ENCODE measurements at regions of chr11 and their contacts with region 1.

Region 1: DNA sequence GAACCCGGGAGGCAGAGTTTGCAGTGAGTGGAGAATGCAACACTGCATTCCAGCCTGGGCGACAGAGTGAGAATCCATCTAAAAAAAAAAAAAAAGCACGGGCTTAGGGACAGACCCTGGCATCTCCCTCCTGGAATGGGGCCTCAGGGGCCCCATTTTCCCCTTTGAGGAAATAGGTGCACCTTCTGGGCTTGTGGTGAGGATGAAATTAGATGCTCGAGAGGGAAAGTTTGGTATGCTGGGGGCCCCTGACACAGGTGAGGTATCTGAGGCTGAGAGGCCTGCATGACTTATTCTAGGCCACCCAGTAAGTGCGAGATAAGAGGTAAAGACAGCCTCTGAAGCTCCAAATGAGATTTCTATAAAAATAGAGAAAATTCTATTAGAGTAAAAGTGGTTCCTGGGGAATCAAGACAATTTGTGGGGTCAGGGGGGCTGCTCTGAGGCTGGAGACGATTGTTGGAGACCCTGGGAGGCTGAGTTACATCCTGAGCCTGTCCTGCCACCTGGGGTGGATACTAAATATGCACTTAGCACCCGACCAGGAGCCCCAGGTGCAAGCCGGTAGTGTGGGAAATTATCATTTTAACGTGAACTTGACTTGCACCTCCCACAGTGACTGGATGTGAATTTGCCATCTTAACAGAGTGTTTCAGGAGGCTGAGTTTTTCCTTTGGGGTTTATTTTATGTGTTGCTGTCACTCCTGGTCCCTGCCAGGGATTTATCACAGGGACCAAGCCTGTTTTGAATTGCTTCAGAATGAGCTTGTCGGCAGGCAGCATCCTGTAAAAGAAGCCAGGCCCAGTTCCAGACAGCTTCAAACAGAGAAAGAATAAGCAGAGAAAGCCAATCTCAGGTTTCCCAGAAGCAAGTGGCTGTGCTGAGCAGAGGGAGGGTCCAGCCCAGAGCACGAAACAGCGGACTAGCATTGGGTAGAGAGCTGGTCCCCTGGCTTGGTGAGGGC is 48.4 kb upstream of the TSKU start:
- DNase-seq: no peak
- H3K4me3 ChIP-seq: no peak overlapping the region
- H3K27ac ChIP-seq: no peak overlapping the region
- H3K4me1 ChIP-seq: peaks cover 0 to 12% (median 5%) of the 10 kb centered on the region in 4 donors
- H3K27me3 ChIP-seq: peaks cover 0 to 3% (median 0%) of the 10 kb centered on the region in 4 donors
- CTCF ChIP-seq: no peak
- EP300 ChIP-seq: no peak
- POLR2A ChIP-seq: no peak

Region 2: GRCh38 chr11:76770642-76771445 is 36.1 kb after region 1 on chr11:
- intact Hi-C with region 1: no loop called
- DNase-seq: peak; percentile 94
- H3K4me3 ChIP-seq: no peak overlapping the region
- H3K27ac ChIP-seq: peak overlapping the region; percentile 73 to 80 (median 78)
- H3K4me1 ChIP-seq: peaks cover 69 to 91% (median 87%) of the 10 kb centered on the region in 4 donors
- H3K27me3 ChIP-seq: no peaks in the 10 kb centered on the region
- CTCF ChIP-seq: no peak
- EP300 ChIP-seq: no peak
- POLR2A ChIP-seq: no peak

Region 3: DNA sequence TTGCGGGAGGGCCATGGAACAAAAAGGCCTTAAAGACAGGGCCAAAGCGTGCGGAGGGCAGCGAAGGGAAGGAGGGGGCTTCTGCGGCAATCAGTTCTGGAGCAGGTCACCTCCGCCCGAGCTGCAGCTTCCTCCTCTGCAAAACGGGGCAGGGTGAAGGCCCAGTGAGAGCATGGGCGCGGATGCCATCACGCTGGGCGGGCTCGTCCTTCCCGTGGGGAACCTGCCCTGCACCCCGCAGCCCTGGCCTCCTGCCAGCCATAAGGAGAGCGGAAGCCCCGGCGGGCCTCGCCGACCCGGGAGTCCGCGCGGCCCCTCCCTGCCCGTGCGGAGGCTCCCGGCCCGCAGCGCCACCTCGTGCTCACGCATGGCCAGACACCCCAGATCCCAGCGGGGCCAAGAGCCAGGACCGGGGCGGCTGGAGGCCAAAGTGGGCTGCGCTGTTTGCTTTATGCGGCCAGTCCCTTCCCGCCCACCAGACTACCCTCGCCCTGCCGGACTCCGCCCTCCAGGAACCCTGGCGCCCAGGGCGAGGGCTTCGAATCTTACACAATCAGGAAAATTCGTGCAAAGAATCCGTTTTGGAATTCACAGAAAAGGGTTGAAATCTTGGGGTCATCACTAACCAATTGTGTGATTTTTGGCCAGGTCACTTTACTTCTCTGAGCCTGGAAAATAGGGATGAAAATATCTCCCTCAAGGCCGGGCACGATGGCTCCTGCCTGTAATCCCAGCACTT is 64.5 kb after region 1 on chr11:
- intact Hi-C with region 1: loop called (anchors 1 kb)
- DNase-seq: peak; percentile 96
- H3K4me3 ChIP-seq: peak overlapping the region; percentile 40 to 53 (median 43)
- H3K27ac ChIP-seq: peak overlapping the region; percentile 4 to 43 (median 23)
- H3K4me1 ChIP-seq: peaks cover 16 to 31% (median 19%) of the 10 kb centered on the region in 4 donors
- H3K27me3 ChIP-seq: peaks cover 0 to 4% (median 0%) of the 10 kb centered on the region in 4 donors
- CTCF ChIP-seq: peak in 2 of 3 experiments; percentile 93 to 96
- EP300 ChIP-seq: no peak
- POLR2A ChIP-seq: no peak

Region 4: DNA sequence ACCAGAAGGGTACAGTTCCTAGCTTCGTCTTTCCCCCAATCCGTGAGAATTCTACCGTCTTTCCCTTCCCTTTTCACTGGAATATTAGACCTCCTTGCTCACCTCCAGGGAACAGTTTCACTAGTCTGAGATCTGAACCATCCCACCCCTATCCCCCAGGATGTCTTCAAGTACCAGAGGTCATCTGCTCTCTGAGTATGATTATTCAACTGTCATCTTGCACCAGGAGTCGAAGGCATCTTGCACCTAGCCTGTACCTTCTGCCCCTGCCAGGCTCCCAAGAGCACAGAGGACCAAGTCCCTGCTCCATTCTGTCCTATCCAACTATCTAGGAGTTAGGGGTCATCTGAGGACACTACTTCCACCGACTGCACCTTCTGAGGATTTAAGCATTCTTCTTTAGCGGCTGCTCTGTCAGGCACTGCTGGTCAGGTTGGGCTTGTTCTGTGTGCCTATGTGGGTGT is 126.8 kb after region 1 on chr11:
- intact Hi-C with region 1: no loop called
- DNase-seq: no peak
- H3K4me3 ChIP-seq: peak overlapping the region; percentile 81 to 86 (median 82)
- H3K27ac ChIP-seq: peak overlapping the region; percentile 89 to 92 (median 90)
- H3K4me1 ChIP-seq: peaks cover 15 to 29% (median 26%) of the 10 kb centered on the region in 4 donors
- H3K27me3 ChIP-seq: no peaks in the 10 kb centered on the region
- CTCF ChIP-seq: no peak
- EP300 ChIP-seq: no peak
- POLR2A ChIP-seq: no peak

Region 5: GRCh38 chr11:76903329-76903728 is 168.6 kb after region 1 on chr11:
- intact Hi-C with region 1: no loop called
- DNase-seq: no peak
- H3K4me3 ChIP-seq: no peak overlapping the region
- H3K27ac ChIP-seq: no peak overlapping the region
- H3K4me1 ChIP-seq: no peaks in the 10 kb centered on the region
- H3K27me3 ChIP-seq: no peaks in the 10 kb centered on the region
- CTCF ChIP-seq: no peak
- EP300 ChIP-seq: no peak
- POLR2A ChIP-seq: no peak

Region 6: DNA sequence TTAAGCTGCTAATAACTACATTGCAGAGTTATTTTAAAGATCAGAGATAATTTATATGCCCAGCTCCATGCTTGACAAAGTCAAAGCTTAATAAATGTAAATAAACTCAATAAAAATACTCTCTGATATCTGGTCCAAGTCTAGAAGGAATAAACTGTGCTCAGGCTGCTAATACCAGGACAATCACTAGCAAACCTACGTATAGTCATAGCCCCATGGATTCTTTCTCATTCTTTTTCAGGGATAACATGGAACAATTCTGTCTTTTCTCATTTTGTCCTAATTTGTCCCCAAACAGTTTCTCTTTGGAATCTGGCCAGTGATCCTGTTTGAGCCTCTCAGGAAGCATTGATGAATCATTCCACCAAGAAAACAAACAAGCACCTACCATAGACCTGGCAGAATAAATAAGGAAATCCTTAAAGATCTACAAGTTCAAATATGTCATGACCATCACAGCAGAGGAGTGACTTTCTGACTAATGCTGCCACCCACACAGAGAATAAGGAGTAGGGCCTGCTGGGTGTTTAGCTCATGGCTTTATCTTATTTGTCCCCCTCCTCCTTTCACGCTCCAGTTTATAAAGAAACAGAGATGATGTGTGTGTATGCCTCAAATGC is 285.3 kb after region 1 on chr11:
- intact Hi-C with region 1: no loop called
- DNase-seq: no peak
- H3K4me3 ChIP-seq: no peak overlapping the region
- H3K27ac ChIP-seq: no peak overlapping the region
- H3K4me1 ChIP-seq: no peaks in the 10 kb centered on the region
- H3K27me3 ChIP-seq: no peaks in the 10 kb centered on the region
- CTCF ChIP-seq: no peak
- EP300 ChIP-seq: no peak
- POLR2A ChIP-seq: no peak

Measured in esophagus muscularis mucosa (tissue), 4 donors.